ENCODE measurements at regions of chr4 and their contacts with region 1.

Region 1: GRCh38 chr4:93791570-93792195 is 36.9 kb upstream of the ATOH1 start:
- DNase-seq: peak; percentile 60
- H3K4me3 ChIP-seq: no peak overlapping the region
- H3K27ac ChIP-seq: no peak overlapping the region
- H3K4me1 ChIP-seq: no peaks in the 10 kb centered on the region
- H3K27me3 ChIP-seq: no peaks in the 10 kb centered on the region
- CTCF ChIP-seq: peak; percentile 66

Region 2: DNA sequence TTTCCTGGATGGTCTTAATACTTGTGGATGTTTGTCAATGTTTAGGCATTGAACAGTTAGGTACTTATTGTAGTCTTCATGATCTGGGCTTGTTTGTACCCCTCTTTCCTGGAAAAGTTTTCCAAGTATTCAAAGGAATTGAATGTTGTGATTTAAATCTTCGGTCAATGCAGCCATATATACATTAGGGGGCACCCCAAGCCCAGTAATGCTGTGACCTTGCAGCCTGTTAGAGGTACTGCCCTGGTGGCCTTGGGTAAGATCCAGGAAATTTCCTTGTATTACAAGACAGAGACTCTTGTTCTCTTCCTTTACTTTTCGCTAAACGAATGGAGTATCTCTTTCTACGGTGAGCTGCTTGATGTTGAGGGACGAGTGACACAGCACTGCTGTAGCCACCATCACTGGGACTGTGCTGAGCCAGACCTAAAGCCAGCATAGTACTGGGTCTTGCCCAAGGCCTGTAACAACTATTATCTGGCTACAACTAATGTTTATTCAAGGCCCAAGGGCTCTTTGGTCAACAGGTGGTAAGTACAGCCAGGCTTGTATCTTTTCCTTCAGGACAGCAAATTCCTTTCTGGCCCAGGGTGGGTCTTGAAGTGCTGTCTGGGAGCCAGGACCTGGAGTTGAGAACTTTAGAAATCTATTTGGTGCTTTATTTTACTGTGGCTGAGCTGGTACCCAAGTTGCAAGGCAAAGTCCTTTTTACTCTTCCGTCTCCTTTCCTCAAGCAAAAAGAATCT is 81.4 kb before region 1 on chr4:
- CTCF ChIA-PET with region 1: no interaction called
- POLR2A ChIA-PET with region 1: no interaction called
- intact Hi-C with region 1: loop called (anchors 2 kb)
- DNase-seq: peak; percentile 29
- H3K4me3 ChIP-seq: no peak overlapping the region
- H3K27ac ChIP-seq: no peak overlapping the region
- H3K4me1 ChIP-seq: no peaks in the 10 kb centered on the region
- H3K27me3 ChIP-seq: no peaks in the 10 kb centered on the region
- CTCF ChIP-seq: peak; percentile 43

Region 3: GRCh38 chr4:94127707-94128328 is 336.1 kb after region 1 on chr4:
- CTCF ChIA-PET with region 1: no interaction called
- POLR2A ChIA-PET with region 1: no interaction called
- intact Hi-C with region 1: loop called (anchors 2 kb)
- DNase-seq: peak; percentile 40
- H3K4me3 ChIP-seq: no peak overlapping the region
- H3K27ac ChIP-seq: no peak overlapping the region
- H3K4me1 ChIP-seq: no peaks in the 10 kb centered on the region
- H3K27me3 ChIP-seq: no peaks in the 10 kb centered on the region
- CTCF ChIP-seq: peak; percentile 54

Region 4: DNA sequence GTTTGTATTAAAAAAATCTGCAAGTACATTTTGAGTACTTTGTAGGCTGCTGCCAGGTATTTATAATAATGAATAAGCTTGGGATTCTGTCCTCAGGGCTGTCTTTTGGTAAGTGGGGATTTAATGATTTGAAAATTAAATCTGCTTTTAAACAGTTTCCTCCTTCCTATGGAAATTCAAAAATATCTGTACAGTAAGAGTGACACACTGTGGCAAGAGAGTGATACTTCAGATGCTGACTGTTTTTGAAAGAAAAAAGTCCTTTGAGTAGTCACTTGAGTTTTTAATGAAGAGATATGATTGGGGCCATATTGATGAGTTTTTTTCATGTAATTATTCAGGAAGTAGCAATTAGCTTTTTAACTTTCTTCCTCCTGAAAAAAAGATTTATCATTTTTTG is 465.1 kb after region 1 on chr4:
- CTCF ChIA-PET with region 1: no interaction called
- POLR2A ChIA-PET with region 1: no interaction called
- intact Hi-C with region 1: loop called (anchors 5 kb)
- DNase-seq: peak; percentile 16
- H3K4me3 ChIP-seq: no peak overlapping the region
- H3K27ac ChIP-seq: no peak overlapping the region
- H3K4me1 ChIP-seq: peaks cover 9% of the 10 kb centered on the region
- H3K27me3 ChIP-seq: no peaks in the 10 kb centered on the region
- CTCF ChIP-seq: peak; percentile 43

Region 5: GRCh38 chr4:94390804-94391410 is 599.2 kb after region 1 on chr4:
- CTCF ChIA-PET with region 1: no interaction called
- POLR2A ChIA-PET with region 1: no interaction called
- intact Hi-C with region 1: loop called (anchors 5 kb)
- DNase-seq: peak; percentile 11
- H3K4me3 ChIP-seq: no peak overlapping the region
- H3K27ac ChIP-seq: no peak overlapping the region
- H3K4me1 ChIP-seq: no peaks in the 10 kb centered on the region
- H3K27me3 ChIP-seq: no peaks in the 10 kb centered on the region
- CTCF ChIP-seq: peak; percentile 53

Measured in A673 (cell line).